K562 (cell line): ENCODE measurements at regions of chr2 and their contacts with region 1.

Region 1: GRCh38 chr2:32772638-32773447 is 145.0 kb downstream of the TTC27 start:
- DNase-seq: peak; percentile 60 to 61 (median 60)
- ATAC-seq: peak; percentile 78
- H3K4me3 ChIP-seq: no peak overlapping the region
- H3K27ac ChIP-seq: no peak overlapping the region
- H3K4me1 ChIP-seq: peaks cover 4 to 8% of the 10 kb centered on the region in 2 experiments; a peak in 2 of 5 replicates
- H3K27me3 ChIP-seq: no peaks in the 10 kb centered on the region
- CTCF ChIP-seq: peak; percentile 66 to 87 (median 75)
- EP300 ChIP-seq: no peak
- POLR2A ChIP-seq: no peak
- RAD21 ChIP-seq: peak; percentile 96 to 97

Region 2: DNA sequence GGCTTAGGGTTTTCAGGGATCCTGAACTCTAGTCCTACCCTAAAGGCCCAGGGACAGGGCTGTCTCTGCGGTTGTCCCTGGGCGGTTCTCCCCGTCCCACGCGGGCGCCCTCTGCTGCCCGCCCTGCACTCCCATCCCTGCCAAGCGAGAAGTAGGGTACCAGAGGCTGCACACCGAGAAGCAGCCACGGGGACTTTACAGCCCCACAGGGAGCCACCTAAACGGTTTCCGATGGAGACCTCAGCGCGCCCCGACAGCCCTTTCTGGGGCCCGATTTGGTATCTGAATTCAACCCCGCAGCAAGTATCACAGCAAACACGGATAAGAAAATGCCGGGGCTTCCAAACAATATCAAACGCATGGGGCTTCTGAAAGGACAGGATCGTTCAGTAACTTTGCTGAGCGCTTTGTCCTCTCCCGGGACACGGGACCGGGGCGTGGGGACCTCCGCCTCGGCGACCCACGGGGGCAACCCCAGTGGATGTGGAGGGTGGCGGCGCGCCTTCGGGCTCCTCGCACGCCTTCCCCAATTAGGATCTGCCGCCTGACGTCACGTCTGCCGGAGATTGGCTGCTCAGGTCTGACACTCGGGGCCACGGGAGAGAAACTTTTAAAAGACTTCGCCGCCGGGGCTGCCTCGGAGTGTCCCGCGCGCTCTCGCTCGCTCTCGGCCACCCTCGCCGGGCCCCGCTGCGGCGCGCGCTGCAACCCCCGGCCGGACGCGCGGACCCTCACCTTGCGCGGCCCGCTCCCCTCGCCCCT is 173.7 kb after region 1 on chr2 and contains the start of gene LTBP1:
- CTCF ChIA-PET with region 1: interaction called, 7 read pairs
- POLR2A ChIA-PET with region 1: no interaction called
- in situ Hi-C with region 1: loop called (anchors 5 kb)
- intact Hi-C with region 1: loop called (anchors 1 kb)
- DNase-seq: peak; percentile 70 to 85 (median 77)
- ATAC-seq: peak; percentile 88
- H3K4me3 ChIP-seq: peak within 1 kb of the TSS; percentile 64
- H3K27ac ChIP-seq: peak within 1 kb of the TSS; percentile 70
- H3K4me1 ChIP-seq: peaks cover 27 to 29% of the 10 kb centered on the region in 2 experiments; a peak in 4 of 5 replicates
- H3K27me3 ChIP-seq: no peaks in the 10 kb centered on the region
- CTCF ChIP-seq: peak; percentile 79 to 92 (median 84)
- EP300 ChIP-seq: no peak
- POLR2A ChIP-seq: no peak
- RAD21 ChIP-seq: peak; percentile 74 to 82
- polyA plus RNA-seq, gene LTBP1: 4.3 to 5.2 TPM

Region 3: DNA sequence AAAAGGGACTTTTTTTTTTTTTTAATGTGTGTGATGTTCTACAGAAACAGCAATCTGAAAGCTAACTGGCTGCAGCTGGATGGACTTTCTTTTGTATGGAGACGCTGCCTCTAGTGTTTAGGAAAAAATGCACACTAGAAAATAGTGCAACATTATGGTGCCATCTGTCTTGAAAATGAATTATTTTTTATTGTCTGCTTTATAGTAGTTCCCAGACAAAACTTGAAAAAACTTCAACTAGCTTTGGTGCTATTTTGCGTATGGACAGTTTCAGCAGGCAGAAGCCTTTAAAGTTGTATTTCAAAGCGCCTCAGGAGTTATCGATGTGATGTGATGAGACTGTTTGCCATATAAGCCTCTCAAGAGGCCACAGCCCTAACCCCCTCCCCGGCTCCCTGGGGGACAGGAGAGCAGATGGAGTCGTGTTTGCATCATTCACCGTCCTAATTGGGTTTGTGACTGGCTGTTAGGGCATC is 260.8 kb after region 1 on chr2:
- CTCF ChIA-PET with region 1: interaction called, 20 read pairs
- POLR2A ChIA-PET with region 1: no interaction called
- in situ Hi-C with region 1: loop called (anchors 5 kb)
- intact Hi-C with region 1: loop called (anchors 1 kb)
- DNase-seq: peak in 1 of 4 experiments; percentile 38
- ATAC-seq: peak; percentile 87
- H3K4me3 ChIP-seq: no peak overlapping the region
- H3K27ac ChIP-seq: no peak overlapping the region
- H3K4me1 ChIP-seq: no peaks in the 10 kb centered on the region; a peak in 1 of 5 replicates
- H3K27me3 ChIP-seq: no peaks in the 10 kb centered on the region
- CTCF ChIP-seq: peak; percentile 61 to 99 (median 97)
- EP300 ChIP-seq: no peak
- POLR2A ChIP-seq: no peak
- RAD21 ChIP-seq: peak; percentile 78 to 88

Region 4: GRCh38 chr2:33372940-33373553 is 600.2 kb after region 1 on chr2:
- CTCF ChIA-PET with region 1: interaction called, 5 read pairs
- POLR2A ChIA-PET with region 1: no interaction called
- in situ Hi-C with region 1: loop called (anchors 5 kb)
- intact Hi-C with region 1: loop called (anchors 2 kb)
- DNase-seq: peak; percentile 43 to 63 (median 58)
- ATAC-seq: peak; percentile 62
- H3K4me3 ChIP-seq: no peak overlapping the region
- H3K27ac ChIP-seq: no peak overlapping the region
- H3K4me1 ChIP-seq: no peaks in the 10 kb centered on the region; a peak in 1 of 5 replicates
- H3K27me3 ChIP-seq: no peaks in the 10 kb centered on the region
- CTCF ChIP-seq: peak; percentile 54 to 78 (median 73); a peak in 5 of 6 replicates
- EP300 ChIP-seq: no peak
- POLR2A ChIP-seq: no peak
- RAD21 ChIP-seq: peak; percentile 81 to 83

Region 5: DNA sequence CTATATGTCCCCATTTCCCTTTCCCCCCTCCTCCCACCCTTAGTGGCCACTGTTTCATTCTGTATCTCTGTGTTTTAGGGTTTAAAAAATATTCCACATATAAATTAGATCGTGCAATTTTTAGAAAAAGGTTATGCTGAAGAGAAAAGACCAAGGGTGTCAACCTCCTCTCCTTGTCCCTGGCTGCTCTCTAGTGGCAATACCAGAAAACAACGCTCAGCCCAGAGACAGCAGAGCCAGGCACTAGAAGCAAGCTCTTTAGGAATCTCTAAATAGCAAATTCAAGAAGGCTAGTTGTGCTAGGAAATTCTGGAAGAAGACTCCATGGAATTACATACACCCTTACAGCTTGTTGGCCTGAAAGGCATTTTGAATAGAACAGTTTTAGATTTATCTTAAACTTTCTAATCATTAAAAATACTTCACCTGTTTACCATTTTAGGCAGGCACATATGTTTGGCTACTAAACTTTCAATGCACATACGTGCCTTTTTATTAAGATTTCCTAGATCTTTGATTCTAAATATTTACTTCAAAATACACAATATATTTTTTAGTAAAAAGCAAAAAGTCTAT is 668.5 kb after region 1 on chr2:
- CTCF ChIA-PET with region 1: no interaction called
- POLR2A ChIA-PET with region 1: no interaction called
- in situ Hi-C with region 1: no loop called
- intact Hi-C with region 1: loop called (anchors 1 kb)
- DNase-seq: peak; percentile 23 to 64 (median 42)
- ATAC-seq: peak; percentile 92
- H3K4me3 ChIP-seq: no peak overlapping the region
- H3K27ac ChIP-seq: no peak overlapping the region
- H3K4me1 ChIP-seq: peaks cover 0 to 5% of the 10 kb centered on the region in 2 experiments; a peak in 2 of 5 replicates
- H3K27me3 ChIP-seq: no peaks in the 10 kb centered on the region
- CTCF ChIP-seq: peak; percentile 69 to 71 (median 71)
- EP300 ChIP-seq: no peak
- POLR2A ChIP-seq: no peak
- RAD21 ChIP-seq: peak; percentile 68 to 89

Region 6: DNA sequence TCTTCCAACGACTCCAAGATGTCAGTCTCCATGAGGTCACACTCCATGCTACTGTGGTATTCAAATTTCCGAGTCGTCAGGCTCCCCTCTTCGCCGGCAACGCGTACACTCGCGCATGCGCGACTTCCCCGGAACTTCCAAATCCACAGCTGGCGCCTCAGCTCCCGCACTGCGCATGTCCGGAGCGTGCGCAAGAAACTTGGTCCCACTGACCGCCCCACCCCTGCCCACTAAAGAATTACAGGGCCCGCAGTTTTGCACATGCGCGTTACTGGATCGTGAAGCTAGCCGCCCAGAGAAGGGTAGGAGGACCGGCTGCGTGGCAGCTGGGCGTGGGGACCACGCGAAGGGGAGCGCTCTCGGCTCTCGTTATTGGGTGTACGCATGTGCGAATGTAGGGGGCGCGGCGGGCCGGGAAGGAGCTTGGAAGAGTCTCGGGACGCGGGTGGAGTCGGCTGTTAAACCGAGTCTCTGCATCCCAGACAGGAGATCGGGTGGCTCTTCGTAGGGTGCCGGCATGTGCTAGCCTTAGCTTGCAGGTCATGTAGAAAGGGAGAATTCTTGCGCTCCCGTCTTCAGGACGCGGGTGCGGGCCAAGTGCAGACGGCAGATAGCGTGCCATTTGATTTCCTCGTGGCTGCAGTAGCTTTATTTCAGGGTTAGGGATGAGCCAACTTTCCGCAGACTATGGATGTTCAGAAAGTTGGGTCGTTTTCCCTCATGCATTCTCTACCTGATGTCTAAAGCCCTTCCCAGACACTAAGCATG is 826.5 kb after region 1 on chr2 and contains the start of gene FAM98A:
- CTCF ChIA-PET with region 1: no interaction called
- POLR2A ChIA-PET with region 1: no interaction called
- in situ Hi-C with region 1: loop called (anchors 25 kb)
- intact Hi-C with region 1: no loop called
- DNase-seq: peak; percentile 95 to 99 (median 97)
- ATAC-seq: peak; percentile 94
- H3K4me3 ChIP-seq: peak within 1 kb of the TSS; percentile 96
- H3K27ac ChIP-seq: peak within 1 kb of the TSS; percentile 84
- H3K4me1 ChIP-seq: peaks cover 0 to 11% of the 10 kb centered on the region in 2 experiments; a peak in 2 of 5 replicates
- H3K27me3 ChIP-seq: no peaks in the 10 kb centered on the region
- CTCF ChIP-seq: 0 out of 6 replicates have a peak, but pooled peaks of 1 of the 3 experiments have one; percentile 24
- EP300 ChIP-seq: no peak
- POLR2A ChIP-seq: peak; percentile 75
- RAD21 ChIP-seq: no peak
- polyA plus RNA-seq, gene FAM98A: 16.5 to 23.4 TPM